Head of caudate nucleus (tissue), 42 donors: ENCODE measurements at regions of chr3 and their contacts with region 1.

Region 1: GRCh38 chr3:57597122-57597923 is at the start of gene ARF4:
- DNase-seq: peak; percentile 96 to 99 (median 98)

Region 2: DNA sequence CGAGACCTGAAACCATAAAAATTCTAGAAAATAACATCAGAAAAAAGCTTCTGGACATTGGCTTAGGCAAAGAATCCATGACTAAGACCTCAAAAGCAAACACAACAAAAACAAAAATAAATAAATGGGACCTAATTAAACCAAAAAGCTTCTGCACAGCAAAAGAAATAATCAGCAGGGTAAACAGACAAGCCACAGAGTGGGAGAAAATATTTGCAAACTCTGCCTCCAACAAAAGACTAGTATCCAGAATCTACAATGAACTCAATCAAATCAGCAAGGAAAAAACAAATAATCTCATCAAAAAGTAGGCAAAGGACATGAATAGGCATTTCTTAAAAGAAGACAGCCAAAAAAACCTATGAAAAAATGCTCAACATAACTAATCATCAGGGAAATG is 112.8 kb before region 1 on chr3:
- intact Hi-C with region 1: no loop called
- DNase-seq: no peak

Region 3: DNA sequence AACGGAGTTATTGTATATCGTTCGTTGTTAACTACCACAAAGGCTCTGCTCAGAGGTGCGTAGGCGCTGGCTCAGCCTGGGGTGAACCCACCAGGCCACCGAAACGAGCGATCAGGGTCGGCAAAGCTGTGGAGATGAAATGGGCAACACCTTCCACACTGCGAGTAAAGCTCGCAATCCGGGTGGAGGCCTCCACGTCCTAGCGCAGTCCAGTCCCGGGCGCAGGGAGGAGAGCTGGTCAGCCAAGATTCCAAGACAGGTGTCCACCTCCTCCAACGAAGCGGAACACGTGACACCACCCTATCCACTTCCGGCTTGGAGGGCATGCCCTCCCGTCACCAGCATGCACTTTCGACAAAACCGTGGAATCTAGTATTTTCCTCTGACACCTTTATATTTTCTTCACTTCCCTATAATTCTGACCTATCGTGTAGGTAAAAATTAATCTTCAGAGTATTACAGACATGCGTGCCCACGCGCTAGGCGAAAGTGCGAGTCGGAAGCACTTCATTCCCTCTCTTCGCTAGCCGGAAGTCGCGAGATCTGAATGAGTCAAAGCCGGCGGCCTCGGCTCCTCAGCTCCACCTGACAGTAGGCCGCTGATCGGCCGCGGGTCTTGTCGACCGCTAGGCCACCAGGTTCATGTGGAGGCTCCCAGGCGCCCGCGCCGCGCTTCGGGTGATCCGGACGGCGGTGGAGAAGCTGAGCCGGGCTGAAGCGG is 41.4 kb before region 1 on chr3 and contains the start of gene PDE12:
- intact Hi-C with region 1: loop called (anchors 1 kb)
- DNase-seq: peak; percentile 79 to 96 (median 91)

Region 4: DNA sequence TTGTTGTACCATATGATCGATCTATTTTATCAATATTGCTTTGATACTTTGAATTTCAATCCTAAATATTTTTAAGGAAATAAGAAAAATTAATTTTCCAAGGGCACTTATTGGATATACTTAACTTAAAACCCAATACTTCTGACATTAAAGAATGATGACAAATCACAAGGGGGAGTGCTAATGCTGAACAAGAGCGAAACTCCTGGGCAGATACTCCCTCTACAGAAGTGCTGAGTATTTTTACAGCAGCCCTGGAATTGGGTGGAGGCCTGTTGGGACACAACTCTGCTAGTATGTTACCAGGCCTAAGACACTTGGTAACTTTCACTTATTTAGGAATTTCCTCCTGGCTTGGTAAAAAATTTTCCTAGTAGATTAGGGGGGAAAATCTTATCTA is 49.4 kb after region 1 on chr3:
- intact Hi-C with region 1: no loop called
- DNase-seq: peak in 6 of 42 donors; percentile 7 to 42 (median 22)

Region 5: GRCh38 chr3:58063022-58063815 is 465.9 kb after region 1 on chr3:
- intact Hi-C with region 1: no loop called
- DNase-seq: peak in 2 of 42 donors; percentile 19 to 24